Left cardiac atrium (tissue), 4 donors: ENCODE measurements at regions of chr16 and their contacts with region 1.

Region 1: DNA sequence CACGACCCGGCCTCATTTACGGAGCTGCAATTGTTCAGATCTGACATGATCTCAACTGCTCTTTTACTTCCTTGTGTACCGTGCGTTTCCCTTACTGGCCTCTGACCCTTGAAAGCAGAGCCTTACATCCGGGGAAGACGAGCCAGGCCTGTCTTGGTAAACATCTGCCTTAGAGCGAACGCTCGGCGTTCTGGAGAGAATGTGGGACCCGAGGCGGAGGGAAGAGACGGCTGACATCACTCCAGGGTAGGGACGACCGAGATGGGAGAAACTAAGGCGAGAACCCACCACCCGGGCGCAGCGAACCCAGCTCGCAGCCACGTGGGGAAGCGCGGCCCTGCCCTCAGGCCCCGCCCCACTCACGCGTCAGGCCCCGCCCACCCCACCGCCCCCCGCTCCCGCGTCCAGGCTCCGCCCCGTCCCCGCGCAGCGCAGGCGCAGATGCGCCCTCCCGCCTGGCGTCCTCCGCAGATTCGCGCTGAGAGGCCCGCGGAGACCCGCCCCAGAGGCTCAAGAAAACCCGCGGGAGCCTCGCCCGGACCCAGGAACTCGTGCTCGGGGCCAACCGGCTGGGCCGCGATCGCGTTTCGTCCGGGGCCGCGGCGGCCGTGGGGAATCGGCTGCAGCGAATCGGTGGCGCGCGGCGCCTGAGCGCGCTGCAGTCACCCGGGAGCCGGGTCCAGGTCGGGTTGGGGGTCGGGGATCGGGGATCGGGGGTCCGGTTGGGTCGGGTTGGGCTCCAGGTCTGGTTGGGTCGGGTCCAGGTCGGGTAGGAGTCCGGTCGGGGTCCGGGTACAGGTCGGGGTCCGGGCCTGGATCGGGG is at the start of gene TELO2:
- DNase-seq: peak; percentile 79
- ATAC-seq: peak; percentile 93 to 94
- total RNA-seq, gene TELO2: 17.9 to 22.2 TPM

Region 2: DNA sequence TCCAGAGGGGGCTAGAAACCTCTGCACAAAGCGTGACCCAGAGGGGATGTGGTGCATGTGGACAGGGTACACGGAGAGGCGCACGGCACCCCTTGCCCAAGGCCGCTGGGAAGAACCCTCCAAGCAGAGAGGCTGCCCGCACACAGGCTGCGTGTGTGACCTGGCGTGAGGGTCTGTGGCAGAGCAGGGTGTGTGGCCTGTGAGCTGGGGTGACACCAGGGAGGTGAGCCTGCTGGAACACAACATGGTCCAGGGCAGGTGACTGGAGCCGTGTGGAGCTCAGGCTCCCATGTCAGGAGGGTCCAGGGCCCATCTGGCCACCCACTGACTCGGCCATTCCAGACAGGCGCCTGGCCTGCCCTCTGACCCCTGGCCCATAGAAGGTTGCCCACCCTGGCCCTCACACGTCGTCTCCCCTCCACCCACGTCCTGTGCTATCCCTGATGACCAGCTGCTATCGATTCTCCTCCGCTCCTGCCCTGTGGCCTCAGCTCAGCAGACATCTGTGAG is 25.5 kb after region 1 on chr16:
- intact Hi-C with region 1: no loop called
- DNase-seq: no peak
- ATAC-seq: peak in 1 of 2 donors; percentile 15

Region 3: DNA sequence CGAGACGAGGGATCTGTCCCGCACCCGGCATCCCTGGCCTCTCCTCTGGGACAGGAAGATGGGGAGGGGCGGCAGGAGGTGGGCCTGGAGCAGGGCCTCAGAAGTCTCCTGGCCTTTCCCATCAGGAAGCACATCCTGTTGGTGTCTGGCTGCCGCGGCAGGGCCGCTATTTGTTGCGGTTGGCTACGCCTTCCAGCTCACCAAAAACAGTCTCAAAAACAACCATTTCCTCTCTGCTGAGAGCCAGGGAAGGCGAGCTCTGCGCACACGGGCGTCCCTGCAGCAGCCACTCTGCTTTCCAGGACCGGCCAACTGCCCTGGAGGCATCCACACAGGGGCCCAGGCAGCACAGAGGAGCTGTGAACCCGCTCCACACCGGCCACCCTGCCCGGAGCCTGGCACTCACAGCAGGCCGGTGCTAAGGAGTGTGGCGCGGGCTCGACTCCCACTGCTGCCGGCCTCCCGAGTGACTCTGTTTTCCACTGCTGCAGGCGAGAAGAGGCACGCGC is 40.4 kb after region 1 on chr16 and contains the start of gene TMEM204:
- intact Hi-C with region 1: loop called in 1 of 2 experiments (anchors 5 kb)
- DNase-seq: peak; percentile 88
- ATAC-seq: peak; percentile 48 to 69
- total RNA-seq, gene TMEM204: 26.7 to 29.4 TPM